Naive thymus-derived CD4-positive, alpha-beta T cell (primary cell): ENCODE measurements at regions of chr2 and their contacts with region 1.

Region 1: GRCh38 chr2:241844066-241844728 is 14.5 kb downstream of the PDCD1 start:
- DNase-seq: peak; percentile 36 to 96 (median 56)
- ATAC-seq: peak; percentile 80
- H3K4me3 ChIP-seq: peak overlapping the region; percentile 56
- H3K4me3 Mint-ChIP-seq: peak overlapping the region; percentile 74 to 85 (median 78)
- H3K27ac ChIP-seq: peak overlapping the region; percentile 13
- H3K27ac Mint-ChIP-seq: peak overlapping the region in 6 of 9 donors; percentile 43 to 79 (median 66)
- H3K4me1 ChIP-seq: peaks cover 20 to 28% of the 10 kb centered on the region in 2 donors
- H3K4me1 Mint-ChIP-seq: peaks cover 21 to 34% (median 29%) of the 10 kb centered on the region in 7 donors
- H3K27me3 ChIP-seq: no peaks in the 10 kb centered on the region
- H3K27me3 Mint-ChIP-seq: peaks cover 0 to 6% (median 0%) of the 10 kb centered on the region in 5 donors

Region 2: GRCh38 chr2:241803387-241804325 is 40.5 kb before region 1 on chr2:
- CTCF ChIA-PET with region 1: no interaction called
- POLR2A ChIA-PET with region 1: no interaction called
- intact Hi-C with region 1: loop called in 1 of 2 experiments (anchors 2 kb)
- DNase-seq: peak in 5 of 9 donors; percentile 28 to 55 (median 37)
- ATAC-seq: peak; percentile 71
- H3K4me3 ChIP-seq: peak overlapping the region; percentile 57
- H3K4me3 Mint-ChIP-seq: peak overlapping the region; percentile 23 to 76 (median 66)
- H3K27ac ChIP-seq: no peak overlapping the region
- H3K27ac Mint-ChIP-seq: peak overlapping the region in 3 of 9 donors; percentile 33 to 48 (median 42)
- H3K4me1 ChIP-seq: peaks cover 11 to 15% of the 10 kb centered on the region in 2 donors
- H3K4me1 Mint-ChIP-seq: peaks cover 0 to 15% (median 8%) of the 10 kb centered on the region in 7 donors
- H3K27me3 ChIP-seq: peaks cover 0 to 4% of the 10 kb centered on the region in 2 donors
- H3K27me3 Mint-ChIP-seq: peaks cover 0 to 6% (median 0%) of the 10 kb centered on the region in 5 donors

Region 3: GRCh38 chr2:241859436-241860183 is 15.4 kb after region 1 on chr2:
- CTCF ChIA-PET with region 1: interaction called, 3 read pairs
- POLR2A ChIA-PET with region 1: no interaction called
- intact Hi-C with region 1: loop called in 1 of 2 experiments (anchors 1 kb)
- DNase-seq: peak in 4 of 9 donors; percentile 18 to 67 (median 30)
- ATAC-seq: peak; percentile 30
- H3K4me3 ChIP-seq: peak overlapping the region; percentile 61
- H3K4me3 Mint-ChIP-seq: peak overlapping the region; percentile 84 to 91 (median 86)
- H3K27ac ChIP-seq: peak overlapping the region; percentile 11
- H3K27ac Mint-ChIP-seq: peak overlapping the region; percentile 9 to 96 (median 70)
- H3K4me1 ChIP-seq: peaks cover 23 to 62% of the 10 kb centered on the region in 2 donors
- H3K4me1 Mint-ChIP-seq: peaks cover 18 to 50% (median 36%) of the 10 kb centered on the region in 7 donors
- H3K27me3 ChIP-seq: peaks cover 0 to 3% of the 10 kb centered on the region in 2 donors
- H3K27me3 Mint-ChIP-seq: peaks cover 5 to 32% (median 19%) of the 10 kb centered on the region in 5 donors

Region 4: GRCh38 chr2:242031481-242032019 is 187.4 kb after region 1 on chr2:
- CTCF ChIA-PET with region 1: no interaction called
- POLR2A ChIA-PET with region 1: no interaction called
- intact Hi-C with region 1: no loop called
- DNase-seq: peak in 8 of 9 donors; percentile 60 to 86 (median 81)
- ATAC-seq: peak; percentile 93
- H3K4me3 ChIP-seq: peak overlapping the region; percentile 85
- H3K4me3 Mint-ChIP-seq: peak overlapping the region; percentile 88 to 96 (median 92)
- H3K27ac ChIP-seq: peak overlapping the region; percentile 67
- H3K27ac Mint-ChIP-seq: peak overlapping the region; percentile 80 to 98 (median 93)
- H3K4me1 ChIP-seq: peaks cover 21 to 24% of the 10 kb centered on the region in 2 donors
- H3K4me1 Mint-ChIP-seq: peaks cover 18 to 70% (median 65%) of the 10 kb centered on the region in 7 donors
- H3K27me3 ChIP-seq: peaks cover 0 to 4% of the 10 kb centered on the region in 2 donors
- H3K27me3 Mint-ChIP-seq: peaks cover 0 to 47% (median 0%) of the 10 kb centered on the region in 5 donors